MCF 10A (cell line): ENCODE measurements at regions of chr4 and their contacts with region 1.

Region 1: GRCh38 chr4:112231779-112232713 is at the start of gene AP1AR:
- DNase-seq: peak; percentile 77
- H3K4me3 Mint-ChIP-seq: peak within 1 kb of the TSS; percentile 99
- H3K27ac Mint-ChIP-seq: peak within 1 kb of the TSS; percentile 98
- H3K4me1 Mint-ChIP-seq: peaks cover 15% of the 10 kb centered on the region
- H3K27me3 Mint-ChIP-seq: no peaks in the 10 kb centered on the region
- CTCF ChIP-seq: peak; percentile 9
- total RNA-seq, gene AP1AR: 38.4 and 39.7 TPM in 2 replicates

Region 2: DNA sequence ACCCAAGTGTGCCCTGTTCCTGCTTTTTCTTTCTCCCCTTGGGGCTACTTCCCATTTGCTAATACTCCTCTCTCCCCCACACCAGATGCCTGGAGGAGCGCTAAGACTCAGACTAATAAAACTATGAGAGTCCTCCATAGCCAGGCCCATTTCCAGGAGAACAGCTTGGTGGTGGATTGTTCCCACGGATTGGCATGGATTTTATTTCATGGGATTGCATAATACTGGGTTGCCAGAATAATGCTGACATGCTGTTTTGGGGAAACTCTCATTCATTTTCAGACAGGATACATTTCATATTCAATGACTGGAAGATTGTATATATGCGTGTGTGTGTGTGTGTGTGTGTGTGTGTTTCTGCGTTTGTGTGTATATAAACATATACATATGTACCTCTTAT is 1161.7 kb before region 1 on chr4:
- CTCF ChIA-PET with region 1: no interaction called
- POLR2A ChIA-PET with region 1: no interaction called
- intact Hi-C with region 1: no loop called
- DNase-seq: peak; percentile 67
- H3K4me3 Mint-ChIP-seq: no peak overlapping the region
- H3K27ac Mint-ChIP-seq: no peak overlapping the region
- H3K4me1 Mint-ChIP-seq: no peaks in the 10 kb centered on the region
- H3K27me3 Mint-ChIP-seq: no peaks in the 10 kb centered on the region
- CTCF ChIP-seq: no peak

Region 3: DNA sequence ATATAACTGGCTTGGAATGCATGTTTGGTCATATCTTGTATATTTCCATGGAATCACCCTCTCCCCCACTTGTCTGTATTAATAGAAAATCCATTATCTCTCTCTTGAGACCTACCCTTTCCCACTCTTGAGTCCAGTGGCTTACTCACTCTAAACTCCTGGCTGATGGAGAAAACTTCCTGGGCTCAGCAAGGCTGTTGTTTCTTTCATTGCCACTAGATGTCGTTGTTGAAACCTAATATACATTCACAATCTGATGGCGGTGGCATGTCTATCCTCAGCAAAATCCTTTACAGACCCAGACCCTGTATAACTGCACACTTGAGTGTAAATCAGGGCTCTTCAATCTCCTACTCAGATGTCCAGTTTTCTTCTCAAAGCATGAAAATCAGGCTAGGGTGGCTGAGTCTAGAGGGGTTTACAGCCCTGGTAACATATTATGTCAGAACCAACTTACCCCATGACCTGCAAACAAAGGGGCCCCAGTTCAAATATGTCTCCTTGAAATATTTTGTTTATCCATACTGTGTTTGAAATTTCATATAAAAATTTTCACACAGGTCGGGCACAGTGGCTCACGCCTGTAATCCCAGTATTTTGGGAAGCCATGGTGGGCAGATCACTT is 156.8 kb before region 1 on chr4:
- CTCF ChIA-PET with region 1: interaction called, 3 read pairs
- POLR2A ChIA-PET with region 1: no interaction called
- intact Hi-C with region 1: loop called (anchors 1 kb)
- DNase-seq: peak; percentile 73
- H3K4me3 Mint-ChIP-seq: no peak overlapping the region
- H3K27ac Mint-ChIP-seq: no peak overlapping the region
- H3K4me1 Mint-ChIP-seq: no peaks in the 10 kb centered on the region
- H3K27me3 Mint-ChIP-seq: no peaks in the 10 kb centered on the region
- CTCF ChIP-seq: peak; percentile 76

Region 4: GRCh38 chr4:112170451-112170993 is 61.5 kb before region 1 on chr4:
- CTCF ChIA-PET with region 1: interaction called, 9 read pairs
- POLR2A ChIA-PET with region 1: interaction called, 40 read pairs
- intact Hi-C with region 1: no loop called
- DNase-seq: peak; percentile 91
- H3K4me3 Mint-ChIP-seq: peak overlapping the region; percentile 11
- H3K27ac Mint-ChIP-seq: peak overlapping the region; percentile 89
- H3K4me1 Mint-ChIP-seq: peaks cover 47% of the 10 kb centered on the region
- H3K27me3 Mint-ChIP-seq: no peaks in the 10 kb centered on the region
- CTCF ChIP-seq: no peak

Region 5: GRCh38 chr4:112245383-112245782 is 13.3 kb after region 1 on chr4:
- CTCF ChIA-PET with region 1: interaction called, 24 read pairs
- POLR2A ChIA-PET with region 1: interaction called, 7 read pairs
- intact Hi-C with region 1: no loop called
- DNase-seq: peak; percentile 7
- H3K4me3 Mint-ChIP-seq: no peak overlapping the region
- H3K27ac Mint-ChIP-seq: no peak overlapping the region
- H3K4me1 Mint-ChIP-seq: peaks cover 7% of the 10 kb centered on the region
- H3K27me3 Mint-ChIP-seq: no peaks in the 10 kb centered on the region
- CTCF ChIP-seq: no peak

Region 6: DNA sequence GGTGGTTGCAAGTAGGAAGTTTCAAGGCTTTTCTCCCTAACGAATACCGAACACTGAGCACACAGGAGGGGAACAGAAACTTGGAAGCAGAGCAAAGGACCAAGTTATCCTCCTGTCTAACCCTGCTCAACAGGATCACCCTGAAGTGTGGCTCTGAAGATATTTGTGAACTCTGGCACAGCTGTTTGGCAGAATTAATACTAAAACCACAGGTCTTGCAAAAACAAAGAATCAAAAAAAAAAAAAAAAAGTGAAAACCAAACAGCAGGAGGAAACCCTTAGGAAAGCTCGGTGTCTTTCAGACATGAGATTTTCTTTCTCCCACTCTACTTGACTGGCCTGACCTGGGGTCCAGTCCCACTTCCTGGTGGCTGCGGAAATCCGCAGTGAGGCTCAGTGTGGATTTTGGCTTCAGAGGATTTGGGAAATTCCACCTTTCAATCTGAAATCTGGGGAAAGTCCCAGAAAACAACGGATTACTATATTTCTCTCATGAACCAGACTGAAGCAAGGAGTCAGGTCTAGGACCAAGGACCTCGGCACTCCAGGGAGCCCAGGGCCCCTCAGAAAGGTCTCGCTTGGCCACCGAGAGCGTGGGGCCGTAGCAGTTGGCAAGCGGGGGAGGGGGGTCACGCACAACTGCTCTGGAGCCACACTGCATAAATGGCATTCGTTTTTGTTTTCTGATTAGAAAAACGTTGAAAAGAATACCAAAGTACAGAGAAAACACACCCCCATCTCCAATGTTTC is 52.8 kb after region 1 on chr4:
- CTCF ChIA-PET with region 1: interaction called, 4 read pairs
- POLR2A ChIA-PET with region 1: interaction called, 25 read pairs
- intact Hi-C with region 1: loop called (anchors 5 kb)
- DNase-seq: peak; percentile 42
- H3K4me3 Mint-ChIP-seq: peak overlapping the region; percentile 81
- H3K27ac Mint-ChIP-seq: peak overlapping the region; percentile 88
- H3K4me1 Mint-ChIP-seq: peaks cover 21% of the 10 kb centered on the region
- H3K27me3 Mint-ChIP-seq: no peaks in the 10 kb centered on the region
- CTCF ChIP-seq: no peak

Region 7: DNA sequence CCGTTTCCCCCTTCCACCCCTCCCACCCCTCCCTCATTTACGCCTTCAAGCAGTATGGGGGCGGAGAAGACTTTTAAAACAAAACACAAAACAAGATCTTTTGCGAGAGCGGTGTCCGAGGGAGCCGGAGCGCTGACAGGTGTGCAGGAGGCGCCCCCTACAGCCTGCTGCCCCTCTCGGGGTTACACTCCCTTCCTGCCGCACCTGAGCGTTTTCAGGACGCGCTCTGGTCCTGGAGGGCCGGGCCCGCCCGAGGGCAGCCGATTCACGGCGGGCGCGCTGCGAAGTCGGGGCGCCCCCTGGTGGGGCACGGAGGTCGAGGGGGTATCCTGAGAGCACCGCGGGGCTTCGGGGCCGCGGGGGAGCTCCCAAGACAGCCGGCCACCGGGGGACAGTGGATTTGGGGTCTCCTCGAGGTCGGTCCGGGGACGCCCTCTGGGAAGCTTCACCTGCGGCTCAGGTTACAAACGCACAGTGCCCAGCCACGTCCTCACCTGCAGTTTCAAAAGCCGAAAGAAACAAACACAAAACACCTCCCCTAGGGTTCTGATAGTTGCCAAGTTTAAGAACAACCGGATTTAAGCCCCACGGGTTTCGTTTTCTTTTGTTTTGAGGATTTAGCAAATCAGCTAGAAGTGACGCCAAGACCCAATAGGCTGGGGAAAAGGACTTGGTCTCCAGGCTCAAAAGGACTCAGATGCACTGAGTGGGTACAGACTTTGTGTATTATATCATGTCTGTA is 291.9 kb after region 1 on chr4:
- CTCF ChIA-PET with region 1: interaction called, 5 read pairs
- POLR2A ChIA-PET with region 1: no interaction called
- intact Hi-C with region 1: loop called (anchors 10 kb)
- DNase-seq: peak; percentile 62
- H3K4me3 Mint-ChIP-seq: peak overlapping the region; percentile 69
- H3K27ac Mint-ChIP-seq: no peak overlapping the region
- H3K4me1 Mint-ChIP-seq: no peaks in the 10 kb centered on the region
- H3K27me3 Mint-ChIP-seq: peaks cover 20% of the 10 kb centered on the region
- CTCF ChIP-seq: peak; percentile 87